ENCODE measurements at regions of chr21 and their contacts with region 1.

Region 1: DNA sequence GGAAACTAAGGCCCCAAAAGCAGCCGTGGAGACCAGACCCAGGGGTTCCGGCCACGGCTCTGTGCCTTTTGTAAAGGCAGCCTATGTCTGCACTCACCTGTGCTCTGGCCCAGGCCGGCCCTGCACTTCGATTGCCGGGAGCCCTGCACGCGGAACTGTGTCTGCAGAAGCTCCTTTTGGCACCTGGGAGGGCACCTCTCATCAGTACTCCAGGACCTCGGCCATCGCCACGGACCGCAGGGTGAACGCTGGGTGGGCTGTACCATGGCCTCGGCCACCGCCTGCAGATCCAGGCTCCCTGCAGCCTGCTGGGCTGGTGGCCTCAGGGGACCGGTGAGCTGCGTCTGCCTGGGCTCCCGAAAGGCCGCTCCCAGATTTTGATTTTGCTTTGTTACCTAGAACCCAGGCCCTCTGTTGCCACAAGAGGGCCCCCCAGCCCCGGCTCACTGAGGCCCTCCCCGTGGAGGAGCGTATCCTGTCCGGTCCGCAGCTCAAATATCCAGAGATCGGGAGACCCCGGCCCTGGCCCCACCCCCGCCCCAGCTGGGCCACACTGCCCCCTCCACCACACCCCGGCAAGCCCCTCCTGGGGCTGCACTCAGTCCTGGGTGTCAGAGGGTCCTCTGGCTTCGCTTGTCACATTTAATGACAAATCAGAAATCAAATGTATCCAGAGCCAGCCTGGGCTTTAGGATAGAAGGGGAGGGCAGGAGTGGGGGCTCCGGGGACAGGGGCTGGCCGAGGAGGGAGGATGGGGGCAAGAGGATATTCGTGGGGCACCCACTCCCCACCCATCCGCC is 60.2 kb upstream of the PDE9A start:
- DNase-seq: peak; percentile 68 to 82
- H3K4me3 ChIP-seq: peak overlapping the region; percentile 10; the same call in 1 of the 2 replicates
- H3K4me3 Mint-ChIP-seq: no peak overlapping the region
- H3K27ac Mint-ChIP-seq: no peak overlapping the region
- H3K4me1 ChIP-seq: peaks cover 5% of the 10 kb centered on the region
- H3K4me1 Mint-ChIP-seq: no peaks in the 10 kb centered on the region
- H3K27me3 ChIP-seq: no peaks in the 10 kb centered on the region
- H3K27me3 Mint-ChIP-seq: no peaks in the 10 kb centered on the region
- CTCF ChIP-seq: peak; percentile 83 to 86

Region 2: GRCh38 chr21:42609811-42610210 is 16.6 kb after region 1 on chr21:
- CTCF ChIA-PET with region 1: interaction called, 12 read pairs
- POLR2A ChIA-PET with region 1: no interaction called
- intact Hi-C with region 1: no loop called
- DNase-seq: peak in 1 of 2 experiments; percentile 45
- H3K4me3 ChIP-seq: no peak overlapping the region
- H3K4me3 Mint-ChIP-seq: no peak overlapping the region
- H3K27ac Mint-ChIP-seq: no peak overlapping the region
- H3K4me1 ChIP-seq: peaks cover 32% of the 10 kb centered on the region
- H3K4me1 Mint-ChIP-seq: peaks cover 18% of the 10 kb centered on the region
- H3K27me3 ChIP-seq: no peaks in the 10 kb centered on the region
- H3K27me3 Mint-ChIP-seq: no peaks in the 10 kb centered on the region
- CTCF ChIP-seq: no peak

Region 3: DNA sequence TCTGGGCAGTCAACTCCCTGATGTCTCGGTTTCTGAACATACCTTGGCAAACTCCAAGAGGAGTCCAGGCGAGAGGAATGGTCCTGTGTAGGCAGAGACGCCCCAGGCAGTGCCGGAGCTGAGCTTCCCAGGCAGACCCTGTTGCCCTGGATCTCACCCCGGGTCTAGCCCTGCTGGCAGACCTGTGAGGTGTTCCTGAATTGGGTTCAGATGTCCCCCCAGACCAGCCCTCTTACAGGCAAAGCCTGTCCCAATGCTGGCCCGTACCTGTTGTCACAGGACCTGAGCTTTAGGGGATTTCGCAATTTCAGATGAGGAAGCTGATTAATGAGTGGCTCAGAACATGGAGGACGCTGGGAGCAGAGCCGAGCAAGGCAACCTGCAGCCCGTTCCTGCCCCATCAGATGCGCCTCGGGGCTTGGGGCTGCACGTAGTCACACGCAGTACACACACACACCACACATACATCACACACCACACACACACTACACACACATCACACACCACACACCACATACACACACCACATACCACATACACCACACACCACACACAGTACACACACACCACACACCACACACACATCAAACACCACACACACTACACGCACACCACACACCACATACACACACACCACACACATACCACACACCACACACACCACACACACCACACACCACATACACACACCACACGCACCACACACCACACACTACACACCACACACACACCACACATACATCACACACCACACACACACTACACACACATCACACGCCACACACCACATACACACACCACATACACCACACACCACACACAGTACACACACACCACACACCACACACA is 21.8 kb after region 1 on chr21:
- CTCF ChIA-PET with region 1: interaction called, 14 read pairs
- POLR2A ChIA-PET with region 1: no interaction called
- intact Hi-C with region 1: no loop called
- DNase-seq: peak; percentile 70 to 87
- H3K4me3 ChIP-seq: no peak overlapping the region
- H3K4me3 Mint-ChIP-seq: no peak overlapping the region
- H3K27ac Mint-ChIP-seq: no peak overlapping the region
- H3K4me1 ChIP-seq: peaks cover 13% of the 10 kb centered on the region
- H3K4me1 Mint-ChIP-seq: no peaks in the 10 kb centered on the region
- H3K27me3 ChIP-seq: no peaks in the 10 kb centered on the region
- H3K27me3 Mint-ChIP-seq: no peaks in the 10 kb centered on the region
- CTCF ChIP-seq: no peak

Region 4: GRCh38 chr21:42652527-42653230 is 59.5 kb after region 1 on chr21:
- CTCF ChIA-PET with region 1: interaction called, 19 read pairs
- POLR2A ChIA-PET with region 1: no interaction called
- intact Hi-C with region 1: no loop called
- DNase-seq: peak; percentile 58 to 59
- H3K4me3 ChIP-seq: no peak overlapping the region
- H3K4me3 Mint-ChIP-seq: peak overlapping the region; percentile 70
- H3K27ac Mint-ChIP-seq: peak overlapping the region; percentile 53
- H3K4me1 ChIP-seq: peaks cover 8% of the 10 kb centered on the region
- H3K4me1 Mint-ChIP-seq: peaks cover 7% of the 10 kb centered on the region
- H3K27me3 ChIP-seq: no peaks in the 10 kb centered on the region
- H3K27me3 Mint-ChIP-seq: no peaks in the 10 kb centered on the region
- CTCF ChIP-seq: peak; percentile 31 to 48

Region 5: GRCh38 chr21:42669041-42669440 is 75.8 kb after region 1 on chr21:
- CTCF ChIA-PET with region 1: interaction called, 3 read pairs
- POLR2A ChIA-PET with region 1: no interaction called
- intact Hi-C with region 1: loop called (anchors 2 kb)
- DNase-seq: peak in 1 of 2 experiments; percentile 23
- H3K4me3 ChIP-seq: no peak overlapping the region
- H3K4me3 Mint-ChIP-seq: no peak overlapping the region
- H3K27ac Mint-ChIP-seq: no peak overlapping the region
- H3K4me1 ChIP-seq: peaks cover 9% of the 10 kb centered on the region
- H3K4me1 Mint-ChIP-seq: no peaks in the 10 kb centered on the region
- H3K27me3 ChIP-seq: no peaks in the 10 kb centered on the region
- H3K27me3 Mint-ChIP-seq: no peaks in the 10 kb centered on the region
- CTCF ChIP-seq: peak in 1 of 2 experiments; percentile 28

Region 6: GRCh38 chr21:42818328-42818749 is 225.1 kb after region 1 on chr21:
- CTCF ChIA-PET with region 1: interaction called, 4 read pairs
- POLR2A ChIA-PET with region 1: no interaction called
- intact Hi-C with region 1: loop called (anchors 2 kb)
- DNase-seq: peak in 1 of 2 experiments; percentile 53
- H3K4me3 ChIP-seq: no peak overlapping the region
- H3K4me3 Mint-ChIP-seq: no peak overlapping the region
- H3K27ac Mint-ChIP-seq: no peak overlapping the region
- H3K4me1 ChIP-seq: no peaks in the 10 kb centered on the region
- H3K4me1 Mint-ChIP-seq: no peaks in the 10 kb centered on the region
- H3K27me3 ChIP-seq: no peaks in the 10 kb centered on the region
- H3K27me3 Mint-ChIP-seq: no peaks in the 10 kb centered on the region
- CTCF ChIP-seq: peak; percentile 53 to 58

Region 7: GRCh38 chr21:42833439-42833815 is 240.2 kb after region 1 on chr21:
- CTCF ChIA-PET with region 1: interaction called, 11 read pairs
- POLR2A ChIA-PET with region 1: no interaction called
- intact Hi-C with region 1: loop called (anchors 5 kb)
- DNase-seq: peak; percentile 67 to 77
- H3K4me3 ChIP-seq: no peak overlapping the region
- H3K4me3 Mint-ChIP-seq: peak overlapping the region; percentile 22
- H3K27ac Mint-ChIP-seq: no peak overlapping the region
- H3K4me1 ChIP-seq: peaks cover 7% of the 10 kb centered on the region; the same call in 1 of the 2 replicates
- H3K4me1 Mint-ChIP-seq: peaks cover 16% of the 10 kb centered on the region
- H3K27me3 ChIP-seq: no peaks in the 10 kb centered on the region
- H3K27me3 Mint-ChIP-seq: no peaks in the 10 kb centered on the region
- CTCF ChIP-seq: peak; percentile 43 to 60